ENCODE measurements at regions of chr11 and their contacts with region 1.

Region 1: DNA sequence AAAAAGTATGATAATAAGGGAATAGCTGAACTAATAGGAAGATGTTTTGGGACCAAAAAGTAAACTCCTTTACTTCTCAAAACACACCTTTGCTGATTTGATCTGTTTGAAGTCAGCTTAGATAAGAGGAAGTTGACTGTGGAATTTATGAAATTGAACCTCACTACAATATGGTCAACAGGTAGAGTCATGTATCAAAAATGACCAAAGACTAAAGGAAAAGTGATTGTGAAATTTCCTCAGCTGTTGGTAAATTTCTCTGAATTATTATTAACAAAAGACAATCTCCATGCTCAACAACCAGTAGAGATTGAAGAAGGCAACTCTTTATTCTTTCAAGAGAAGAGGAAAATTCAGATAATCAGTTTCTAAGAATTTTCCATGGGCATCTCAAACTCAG is 826.5 kb downstream of the KCNA4 start:
- DNase-seq: no peak
- ATAC-seq: no peak
- H3K4me3 ChIP-seq: no peak overlapping the region
- H3K27ac ChIP-seq: no peak overlapping the region
- H3K4me1 ChIP-seq: no peaks in the 10 kb centered on the region
- H3K27me3 ChIP-seq: no peaks in the 10 kb centered on the region
- CTCF ChIP-seq: no peak

Region 2: GRCh38 chr11:29251738-29252137 is 61.4 kb after region 1 on chr11:
- intact Hi-C with region 1: loop called in 1 of 10 experiments (anchors 10 kb)
- DNase-seq: no peak
- ATAC-seq: no peak
- H3K4me3 ChIP-seq: no peak overlapping the region
- H3K27ac ChIP-seq: no peak overlapping the region
- H3K4me1 ChIP-seq: no peaks in the 10 kb centered on the region
- H3K27me3 ChIP-seq: no peaks in the 10 kb centered on the region
- CTCF ChIP-seq: no peak

Measured in heart right ventricle (tissue), 16 donors.